ENCODE measurements at regions of chr20 and their contacts with region 1.

Region 1: DNA sequence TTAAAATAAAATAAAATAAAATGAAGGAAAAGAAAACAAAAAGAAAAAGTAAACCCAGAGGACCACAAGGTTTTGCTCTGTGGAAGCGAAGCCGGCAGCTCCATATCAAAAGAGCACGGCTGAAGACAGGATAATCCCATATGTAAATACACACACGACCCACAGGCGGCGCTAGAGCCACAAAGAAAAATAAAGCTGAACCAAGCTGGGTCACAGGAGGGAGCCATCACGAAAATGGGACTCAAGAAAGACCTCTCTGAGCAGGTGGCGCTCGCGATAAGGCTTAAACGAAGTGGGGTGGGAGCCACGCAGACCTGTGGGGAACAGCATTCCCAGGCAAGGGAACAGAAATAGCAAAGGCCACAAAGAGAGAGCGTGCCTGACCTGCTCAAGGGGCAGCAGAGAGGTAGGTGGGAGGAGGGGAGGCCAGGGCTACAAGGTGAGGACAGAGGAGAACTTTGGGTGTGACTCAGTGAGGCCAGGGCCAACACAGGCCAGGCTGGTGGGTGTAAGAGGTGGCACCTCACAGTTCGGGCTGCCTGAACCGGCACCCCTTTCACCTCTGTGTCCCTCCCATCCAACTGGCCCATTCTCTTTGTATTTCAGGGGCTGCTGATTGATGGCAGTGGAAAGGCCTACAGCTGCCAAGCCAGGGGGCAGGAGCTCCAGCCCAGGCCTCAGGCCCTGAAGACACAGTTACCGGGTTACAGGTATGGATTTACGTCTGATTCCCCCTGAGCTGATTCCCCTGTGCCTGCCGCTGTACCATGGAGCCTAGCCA is 26.0 kb downstream of the PTGIS start:
- DNase-seq: no peak

Region 2: GRCh38 chr20:49320444-49320843 is 221.5 kb before region 1 on chr20:
- intact Hi-C with region 1: no loop called
- DNase-seq: no peak

Region 3: DNA sequence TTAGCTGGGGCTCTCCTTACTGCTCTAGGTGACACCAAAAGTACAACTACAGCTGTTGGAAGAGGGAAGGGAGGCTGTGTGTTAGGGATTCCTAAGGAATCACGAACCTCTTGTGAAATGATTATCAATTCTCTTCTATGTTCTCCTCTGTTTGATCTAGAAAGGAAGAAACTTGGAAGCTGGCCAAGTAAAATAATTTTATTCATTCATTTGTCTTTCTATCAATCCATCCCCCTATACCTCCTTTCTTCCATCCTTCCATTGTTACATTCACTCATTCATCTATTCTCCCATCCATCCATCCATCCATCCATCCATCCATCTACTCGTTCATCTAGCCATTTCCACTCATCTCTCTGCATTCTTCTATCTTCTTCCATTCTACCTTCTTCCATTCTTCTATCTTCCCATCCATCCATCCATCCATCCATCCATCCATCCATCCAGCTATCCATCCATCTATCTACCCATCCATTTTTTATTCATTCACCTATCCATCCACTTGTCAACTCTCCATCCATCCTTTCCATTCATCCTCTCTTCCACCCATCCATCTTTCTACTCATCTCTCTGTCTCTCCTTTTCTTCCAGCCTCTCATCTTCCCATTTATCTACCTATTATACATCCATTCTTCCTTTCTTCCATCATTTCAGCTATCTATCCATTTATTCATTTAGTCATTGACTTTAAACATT is 211.2 kb before region 1 on chr20:
- intact Hi-C with region 1: loop called in 1 of 2 experiments (anchors 5 kb)
- DNase-seq: no peak

Region 4: DNA sequence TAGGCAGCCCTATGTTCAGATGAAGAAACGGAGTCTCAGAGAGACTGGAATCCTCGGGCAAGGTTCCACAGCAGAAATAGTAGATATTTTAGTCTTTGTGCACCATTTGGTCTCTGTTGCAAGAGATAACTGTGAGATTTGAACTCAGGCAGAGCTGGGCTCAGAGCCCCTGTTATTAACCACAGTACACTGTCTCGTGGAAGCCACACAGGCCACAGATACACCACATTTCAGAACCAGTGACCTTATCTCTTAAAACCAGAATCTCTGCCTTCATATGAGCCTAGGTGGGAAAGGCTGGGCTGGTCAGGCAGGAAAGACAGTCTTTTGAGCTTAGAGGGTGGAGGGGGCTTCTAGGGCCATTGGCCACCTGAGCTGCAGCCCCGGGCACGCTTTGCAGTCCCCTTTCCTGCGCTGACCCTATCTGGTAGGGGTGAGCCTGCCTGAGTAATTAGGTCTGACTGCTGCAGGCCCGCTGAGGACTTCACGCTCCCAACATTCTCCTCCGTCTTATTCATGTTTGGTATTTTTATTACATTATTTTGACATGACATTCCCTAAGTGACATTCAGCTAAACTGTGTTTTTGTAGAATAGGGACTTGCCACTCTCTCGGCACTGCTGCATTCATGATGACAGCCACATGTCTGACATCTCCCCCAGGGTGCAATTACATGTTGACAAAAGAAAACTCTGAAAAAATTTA is 130.6 kb before region 1 on chr20:
- intact Hi-C with region 1: no loop called
- DNase-seq: no peak

Region 5: GRCh38 chr20:49762940-49763766 is 221.2 kb after region 1 on chr20:
- intact Hi-C with region 1: no loop called
- DNase-seq: no peak

Region 6: DNA sequence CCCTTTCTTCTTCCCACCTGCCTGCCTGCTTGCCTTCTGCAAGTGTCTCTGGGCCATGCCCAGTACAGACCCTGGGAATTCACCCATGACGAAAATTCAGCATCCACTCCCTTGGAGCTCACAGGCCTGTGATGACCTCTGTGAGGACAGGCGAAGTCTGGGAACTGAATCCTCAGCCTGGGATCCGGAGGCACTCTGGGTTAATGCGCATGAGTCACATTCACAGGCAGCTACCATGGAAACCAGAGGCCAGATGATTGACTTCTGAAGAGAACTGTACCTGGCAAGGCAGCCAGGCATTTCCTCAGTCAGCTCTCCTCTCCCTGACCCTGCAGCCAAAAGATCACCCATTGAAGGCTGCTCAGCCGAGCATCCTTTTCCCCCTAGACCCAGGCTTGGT is 311.7 kb after region 1 on chr20:
- intact Hi-C with region 1: loop called in 1 of 2 experiments (anchors 10 kb)
- DNase-seq: no peak